Psoas muscle (tissue), 8 donors: ENCODE measurements at regions of chr1 and their contacts with region 1.

Region 1: GRCh38 chr1:94463765-94464330 is 45.7 kb downstream of the ABCD3 start:
- DNase-seq: no peak
- ATAC-seq: peak; percentile 56 to 90 (median 67)
- H3K4me3 ChIP-seq: no peak overlapping the region
- H3K27ac ChIP-seq: no peak overlapping the region
- H3K4me1 ChIP-seq: no peaks in the 10 kb centered on the region
- H3K27me3 ChIP-seq: no peaks in the 10 kb centered on the region
- CTCF ChIP-seq: peak; percentile 65

Region 2: DNA sequence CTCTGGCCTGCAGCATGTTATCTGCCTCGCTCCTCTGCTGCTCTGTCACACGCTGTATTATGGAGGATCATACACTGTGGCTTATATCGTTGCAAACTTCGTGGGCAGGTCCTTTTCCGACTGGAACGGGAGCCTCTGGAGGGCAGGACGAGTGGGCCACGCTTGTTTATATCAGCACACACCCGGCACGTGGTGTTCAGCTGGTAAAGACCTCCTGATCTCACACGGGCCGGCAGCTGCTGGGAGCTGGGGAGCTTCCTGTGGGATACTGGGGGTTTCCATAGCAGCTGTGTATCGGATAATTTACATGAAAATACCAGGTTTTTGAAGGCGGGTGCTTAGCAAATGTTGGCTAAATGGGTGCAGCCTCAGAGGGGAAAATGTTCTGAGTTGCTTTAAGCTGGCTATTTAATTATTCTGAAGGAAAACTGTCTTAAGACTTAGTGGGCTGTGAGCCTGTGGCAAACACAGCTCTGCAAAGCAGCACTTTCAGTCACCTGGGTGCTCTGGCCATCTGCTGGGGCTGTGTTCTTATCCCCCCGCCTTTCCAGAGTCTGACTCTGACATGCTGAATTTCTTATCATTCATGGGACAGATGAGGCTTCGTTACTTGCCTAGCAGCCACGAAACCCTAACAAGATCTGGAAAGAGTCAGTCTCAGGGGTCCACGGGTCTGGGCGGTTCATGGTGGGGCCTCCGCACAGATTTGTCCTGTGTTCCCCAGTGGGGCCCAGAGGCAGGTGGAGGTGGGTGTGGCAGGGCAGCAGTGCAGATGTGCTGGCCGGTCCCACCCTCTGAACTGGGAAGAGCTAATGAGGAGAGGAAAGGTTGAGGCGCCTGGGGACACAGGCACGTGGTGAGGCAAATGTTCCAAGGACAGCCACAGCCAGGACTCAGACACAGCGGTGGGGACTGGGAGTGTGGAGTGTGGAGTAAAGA is 450.9 kb before region 1 on chr1:
- intact Hi-C with region 1: no loop called
- DNase-seq: no peak
- ATAC-seq: no peak
- H3K4me3 ChIP-seq: no peak overlapping the region
- H3K27ac ChIP-seq: no peak overlapping the region
- H3K4me1 ChIP-seq: no peaks in the 10 kb centered on the region
- H3K27me3 ChIP-seq: no peaks in the 10 kb centered on the region
- CTCF ChIP-seq: no peak

Region 3: GRCh38 chr1:94025383-94026340 is 438.2 kb before region 1 on chr1:
- intact Hi-C with region 1: loop called in 1 of 2 experiments (anchors 10 kb)
- DNase-seq: no peak
- ATAC-seq: peak in 3 of 4 donors; percentile 50 to 71 (median 55)
- H3K4me3 ChIP-seq: no peak overlapping the region
- H3K27ac ChIP-seq: no peak overlapping the region
- H3K4me1 ChIP-seq: peaks cover 4% of the 10 kb centered on the region
- H3K27me3 ChIP-seq: no peaks in the 10 kb centered on the region
- CTCF ChIP-seq: peak; percentile 81

Region 4: DNA sequence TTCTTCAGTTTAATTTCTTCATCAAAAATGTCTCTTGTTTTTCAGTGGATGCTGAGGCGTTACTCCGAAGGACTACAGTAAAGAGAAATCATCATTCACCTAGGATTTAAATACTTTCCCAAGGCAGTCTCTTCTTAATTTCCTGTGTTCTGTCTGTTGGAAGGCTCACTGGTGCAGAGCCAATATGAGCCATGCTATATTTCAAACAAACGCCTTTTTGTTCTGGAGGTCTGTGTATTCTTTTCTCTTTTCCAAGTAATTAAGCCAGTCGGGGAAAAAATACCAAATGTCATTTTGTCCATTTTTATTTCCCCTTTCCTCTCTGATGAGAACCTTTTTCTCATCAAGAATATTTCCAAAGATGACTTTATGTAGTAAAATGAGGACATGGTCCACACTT is 976.7 kb after region 1 on chr1:
- intact Hi-C with region 1: no loop called
- DNase-seq: no peak
- ATAC-seq: no peak
- H3K4me3 ChIP-seq: no peak overlapping the region
- H3K27ac ChIP-seq: no peak overlapping the region
- H3K4me1 ChIP-seq: no peaks in the 10 kb centered on the region
- H3K27me3 ChIP-seq: no peaks in the 10 kb centered on the region
- CTCF ChIP-seq: no peak